Spleen (tissue), 13 donors: ENCODE measurements at regions of chr1 and their contacts with region 1.

Region 1: DNA sequence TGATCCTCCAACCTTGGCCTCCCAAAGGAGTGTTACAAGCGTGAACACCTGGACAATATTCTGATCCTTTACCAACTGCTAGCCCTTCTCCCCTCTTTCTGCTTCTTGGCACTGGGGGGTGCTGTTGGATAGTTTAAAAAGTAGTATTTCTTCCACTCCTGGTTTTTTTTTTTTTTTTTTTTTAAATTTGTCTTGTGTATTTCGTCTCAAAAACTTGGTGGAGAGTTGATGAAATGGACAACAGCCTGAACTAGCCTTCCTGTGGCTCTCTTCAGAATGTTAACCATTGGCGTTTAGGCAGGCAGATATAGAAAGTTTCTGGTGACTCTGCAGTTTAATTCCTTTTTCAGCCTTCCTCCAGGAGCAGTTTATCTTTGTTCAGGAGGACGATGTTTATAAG is 69.7 kb upstream of the USP24 start:
- DNase-seq: no peak
- H3K4me3 ChIP-seq: no peak overlapping the region
- H3K27ac ChIP-seq: no peak overlapping the region
- H3K4me1 ChIP-seq: peaks cover 0 to 24% (median 4%) of the 10 kb centered on the region in 6 donors
- H3K27me3 ChIP-seq: no peaks in the 10 kb centered on the region
- CTCF ChIP-seq: peak; percentile 41 to 81 (median 63)
- POLR2A ChIP-seq: no peak

Region 2: GRCh38 chr1:55353707-55354620 is 69.1 kb after region 1 on chr1:
- intact Hi-C with region 1: no loop called
- DNase-seq: no peak
- H3K4me3 ChIP-seq: no peak overlapping the region
- H3K27ac ChIP-seq: peak overlapping the region in 2 of 8 donors; percentile 33 to 42
- H3K4me1 ChIP-seq: peaks cover 0 to 8% (median 2%) of the 10 kb centered on the region in 6 donors
- H3K27me3 ChIP-seq: no peaks in the 10 kb centered on the region
- CTCF ChIP-seq: no peak
- POLR2A ChIP-seq: no peak

Region 3: DNA sequence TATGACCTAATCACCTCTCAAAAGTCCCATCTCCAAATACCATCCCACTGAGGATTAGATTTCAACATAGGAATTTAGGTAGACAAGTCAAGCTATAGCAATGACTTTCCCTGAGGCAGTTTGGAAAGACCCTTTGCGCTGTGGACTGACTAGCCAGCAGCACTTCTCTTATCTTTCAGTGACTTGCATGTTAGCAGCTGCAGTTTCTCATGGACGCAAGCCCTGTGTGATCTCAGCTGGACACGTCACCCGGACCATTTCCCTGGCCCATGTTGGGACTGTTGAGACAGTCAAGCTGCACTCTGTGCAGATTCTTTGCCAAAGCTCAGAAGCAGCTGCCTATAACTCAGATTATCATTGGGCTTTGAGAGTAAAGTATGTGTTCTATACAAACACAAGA is 338.5 kb after region 1 on chr1:
- intact Hi-C with region 1: no loop called
- DNase-seq: no peak
- H3K4me3 ChIP-seq: no peak overlapping the region
- H3K27ac ChIP-seq: no peak overlapping the region
- H3K4me1 ChIP-seq: no peaks in the 10 kb centered on the region
- H3K27me3 ChIP-seq: no peaks in the 10 kb centered on the region
- CTCF ChIP-seq: no peak
- POLR2A ChIP-seq: no peak

Region 4: GRCh38 chr1:56710646-56711045 is 1425.8 kb after region 1 on chr1:
- intact Hi-C with region 1: loop called (anchors 10 kb)
- DNase-seq: no peak
- H3K4me3 ChIP-seq: no peak overlapping the region
- H3K27ac ChIP-seq: no peak overlapping the region
- H3K4me1 ChIP-seq: no peaks in the 10 kb centered on the region
- H3K27me3 ChIP-seq: peaks cover 0 to 10% (median 0%) of the 10 kb centered on the region in 7 donors
- CTCF ChIP-seq: no peak
- POLR2A ChIP-seq: no peak